Caco-2 (cell line): ENCODE measurements at regions of chr6 and their contacts with region 1.

Region 1: GRCh38 chr6:125314019-125314581 is 12.3 kb upstream of the HDDC2 start:
- DNase-seq: peak; percentile 50 to 59
- H3K4me3 ChIP-seq: no peak overlapping the region
- H3K4me3 Mint-ChIP-seq: no peak overlapping the region
- H3K27ac Mint-ChIP-seq: no peak overlapping the region
- H3K4me1 ChIP-seq: 0 out of 2 replicates have a peak, but pooled peaks cover 5% of the 10 kb centered on the region
- H3K4me1 Mint-ChIP-seq: no peaks in the 10 kb centered on the region
- H3K27me3 ChIP-seq: no peaks in the 10 kb centered on the region
- H3K27me3 Mint-ChIP-seq: peaks cover 3% of the 10 kb centered on the region
- CTCF ChIP-seq: peak; percentile 68 to 86

Region 2: DNA sequence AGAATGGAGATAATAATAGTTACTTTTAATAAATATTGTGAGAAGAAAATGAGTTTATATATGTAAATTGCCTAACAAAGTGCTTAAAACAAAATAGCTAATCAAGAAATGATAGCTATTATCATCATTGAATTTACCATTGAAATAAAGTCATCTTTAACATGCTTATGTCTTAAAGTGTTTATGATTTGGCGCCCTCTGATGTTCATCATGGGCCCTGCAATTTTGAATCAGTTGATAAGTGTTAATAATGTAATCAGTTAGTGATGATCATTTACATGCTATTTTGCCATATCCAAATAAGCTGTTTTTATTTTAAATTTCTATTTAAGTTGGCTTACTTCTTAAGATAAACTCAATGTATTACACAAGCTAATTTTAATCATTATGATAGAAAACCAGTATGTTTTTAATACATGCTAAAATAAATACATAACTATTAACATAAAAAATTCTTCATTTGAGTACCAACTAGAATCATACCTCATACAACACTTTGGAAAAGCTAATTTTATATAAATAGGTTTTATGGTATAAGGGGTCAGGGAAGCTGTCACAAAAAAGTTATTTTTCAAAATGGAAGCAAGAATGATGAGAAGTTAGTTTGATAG is 199.7 kb before region 1 on chr6:
- CTCF ChIA-PET with region 1: no interaction called
- POLR2A ChIA-PET with region 1: no interaction called
- intact Hi-C with region 1: no loop called
- DNase-seq: peak in 1 of 2 experiments; percentile 30
- H3K4me3 ChIP-seq: no peak overlapping the region
- H3K4me3 Mint-ChIP-seq: no peak overlapping the region
- H3K27ac Mint-ChIP-seq: no peak overlapping the region
- H3K4me1 ChIP-seq: no peaks in the 10 kb centered on the region
- H3K4me1 Mint-ChIP-seq: no peaks in the 10 kb centered on the region
- H3K27me3 ChIP-seq: no peaks in the 10 kb centered on the region
- H3K27me3 Mint-ChIP-seq: peaks cover 5% of the 10 kb centered on the region
- CTCF ChIP-seq: peak; percentile 53 to 63

Region 3: GRCh38 chr6:125346201-125346925 is 32.3 kb after region 1 on chr6:
- CTCF ChIA-PET with region 1: no interaction called
- POLR2A ChIA-PET with region 1: interaction called, 3 read pairs
- intact Hi-C with region 1: loop called (anchors 1 kb)
- DNase-seq: no peak
- H3K4me3 ChIP-seq: no peak overlapping the region
- H3K4me3 Mint-ChIP-seq: no peak overlapping the region
- H3K27ac Mint-ChIP-seq: no peak overlapping the region
- H3K4me1 ChIP-seq: no peaks in the 10 kb centered on the region
- H3K4me1 Mint-ChIP-seq: no peaks in the 10 kb centered on the region
- H3K27me3 ChIP-seq: no peaks in the 10 kb centered on the region; the same call in none of the 2 replicates
- H3K27me3 Mint-ChIP-seq: no peaks in the 10 kb centered on the region
- CTCF ChIP-seq: no peak

Region 4: DNA sequence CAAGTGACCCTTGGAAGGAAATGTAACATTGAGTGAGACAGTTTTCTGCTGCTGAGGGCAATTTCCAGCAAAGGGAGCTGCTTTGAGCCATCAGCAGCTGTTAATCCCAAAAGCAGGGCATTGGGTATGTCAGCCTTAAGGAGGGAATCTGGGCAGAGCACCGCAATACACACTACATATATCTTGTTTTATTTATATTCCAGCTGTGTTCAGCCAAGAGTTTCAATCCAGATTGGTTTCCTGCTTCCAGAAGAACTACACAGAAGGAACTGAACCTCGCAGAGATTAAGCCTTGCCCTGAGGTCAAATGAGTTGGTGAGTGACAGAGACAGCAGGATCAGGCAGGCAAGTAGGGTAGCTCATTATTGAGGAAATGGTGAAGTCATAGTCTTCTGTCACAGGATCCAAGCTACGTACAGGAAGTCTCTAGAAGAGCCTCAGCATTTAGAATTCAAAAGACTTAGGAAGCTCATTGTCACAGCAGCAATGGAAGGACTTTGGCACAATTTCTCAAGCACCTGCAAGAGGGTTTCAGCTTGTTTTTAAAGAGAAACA is 325.4 kb after region 1 on chr6:
- CTCF ChIA-PET with region 1: no interaction called
- POLR2A ChIA-PET with region 1: no interaction called
- intact Hi-C with region 1: loop called (anchors 10 kb)
- DNase-seq: no peak
- H3K4me3 ChIP-seq: no peak overlapping the region
- H3K4me3 Mint-ChIP-seq: no peak overlapping the region
- H3K27ac Mint-ChIP-seq: no peak overlapping the region
- H3K4me1 ChIP-seq: no peaks in the 10 kb centered on the region
- H3K4me1 Mint-ChIP-seq: no peaks in the 10 kb centered on the region
- H3K27me3 ChIP-seq: no peaks in the 10 kb centered on the region; the same call in 1 of the 2 replicates
- H3K27me3 Mint-ChIP-seq: peaks cover 4% of the 10 kb centered on the region
- CTCF ChIP-seq: no peak

Region 5: DNA sequence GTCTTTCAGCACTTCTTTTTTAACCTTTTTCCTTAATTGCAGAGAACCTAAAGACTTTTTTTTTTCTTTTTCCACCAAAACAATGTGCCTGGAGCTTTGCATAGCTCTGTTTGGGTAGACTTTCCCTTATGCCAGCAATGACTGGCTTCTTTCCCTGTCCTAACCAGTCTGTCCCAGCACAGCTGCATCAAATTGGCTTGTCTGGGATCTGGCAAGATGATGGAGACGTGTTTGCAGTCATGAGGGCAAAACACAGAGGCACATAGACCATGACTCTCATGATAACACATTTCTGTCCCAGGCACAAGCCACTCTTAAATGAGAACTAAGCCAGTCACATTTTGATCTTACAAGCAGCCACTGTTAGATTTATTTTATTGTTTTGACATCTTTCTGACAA is 451.8 kb after region 1 on chr6:
- CTCF ChIA-PET with region 1: no interaction called
- POLR2A ChIA-PET with region 1: no interaction called
- intact Hi-C with region 1: loop called (anchors 1 kb)
- DNase-seq: no peak
- H3K4me3 ChIP-seq: no peak overlapping the region
- H3K4me3 Mint-ChIP-seq: no peak overlapping the region
- H3K27ac Mint-ChIP-seq: no peak overlapping the region
- H3K4me1 ChIP-seq: no peaks in the 10 kb centered on the region
- H3K4me1 Mint-ChIP-seq: no peaks in the 10 kb centered on the region
- H3K27me3 ChIP-seq: no peaks in the 10 kb centered on the region
- H3K27me3 Mint-ChIP-seq: peaks cover 3% of the 10 kb centered on the region
- CTCF ChIP-seq: no peak

Region 6: DNA sequence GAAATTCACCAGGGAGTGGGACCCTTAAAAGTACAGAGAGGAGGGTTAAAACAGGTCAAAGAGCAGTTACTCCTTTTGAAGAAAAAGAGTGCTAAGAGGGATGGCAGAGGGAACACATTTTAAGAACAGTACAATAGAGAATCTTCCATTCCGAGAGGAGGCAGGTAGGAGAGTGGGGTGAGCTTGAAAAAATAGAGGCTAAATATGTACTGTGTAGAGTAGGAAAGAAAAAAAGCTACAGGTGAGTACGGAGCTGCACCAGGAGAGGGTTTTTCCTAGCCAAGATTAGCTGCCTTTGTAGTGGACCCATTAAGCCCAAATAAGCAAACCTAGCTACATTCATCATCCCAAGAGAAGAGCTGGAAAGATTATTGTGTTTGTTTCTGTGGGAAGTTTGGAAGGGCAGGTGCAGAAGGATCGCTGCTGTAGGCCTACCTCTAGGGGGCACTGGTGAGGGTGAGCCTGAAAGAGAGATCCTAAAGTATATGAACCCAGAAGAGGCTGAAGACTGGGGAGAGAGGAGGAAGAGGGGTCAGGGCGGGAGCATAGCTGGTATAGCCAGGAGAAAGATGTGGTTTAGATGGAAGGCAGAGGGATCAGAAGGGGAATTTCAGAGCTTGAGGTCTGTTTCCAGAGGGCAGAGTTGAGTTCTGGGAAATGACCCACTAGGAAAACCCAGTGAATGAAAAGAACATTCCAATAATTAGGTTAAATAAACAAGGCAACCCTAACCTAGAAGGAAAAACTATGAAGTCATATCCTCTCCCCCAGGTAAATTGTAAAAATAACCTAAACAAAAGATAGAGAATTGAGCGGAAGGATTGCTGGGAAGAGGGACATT is 592.3 kb after region 1 on chr6:
- CTCF ChIA-PET with region 1: no interaction called
- POLR2A ChIA-PET with region 1: no interaction called
- intact Hi-C with region 1: loop called (anchors 5 kb)
- DNase-seq: peak; percentile 53 to 64
- H3K4me3 ChIP-seq: no peak overlapping the region
- H3K4me3 Mint-ChIP-seq: no peak overlapping the region
- H3K27ac Mint-ChIP-seq: peak overlapping the region; percentile 7
- H3K4me1 ChIP-seq: peaks cover 29% of the 10 kb centered on the region
- H3K4me1 Mint-ChIP-seq: peaks cover 51% of the 10 kb centered on the region
- H3K27me3 ChIP-seq: no peaks in the 10 kb centered on the region
- H3K27me3 Mint-ChIP-seq: no peaks in the 10 kb centered on the region
- CTCF ChIP-seq: peak; percentile 68 to 71

Region 7: DNA sequence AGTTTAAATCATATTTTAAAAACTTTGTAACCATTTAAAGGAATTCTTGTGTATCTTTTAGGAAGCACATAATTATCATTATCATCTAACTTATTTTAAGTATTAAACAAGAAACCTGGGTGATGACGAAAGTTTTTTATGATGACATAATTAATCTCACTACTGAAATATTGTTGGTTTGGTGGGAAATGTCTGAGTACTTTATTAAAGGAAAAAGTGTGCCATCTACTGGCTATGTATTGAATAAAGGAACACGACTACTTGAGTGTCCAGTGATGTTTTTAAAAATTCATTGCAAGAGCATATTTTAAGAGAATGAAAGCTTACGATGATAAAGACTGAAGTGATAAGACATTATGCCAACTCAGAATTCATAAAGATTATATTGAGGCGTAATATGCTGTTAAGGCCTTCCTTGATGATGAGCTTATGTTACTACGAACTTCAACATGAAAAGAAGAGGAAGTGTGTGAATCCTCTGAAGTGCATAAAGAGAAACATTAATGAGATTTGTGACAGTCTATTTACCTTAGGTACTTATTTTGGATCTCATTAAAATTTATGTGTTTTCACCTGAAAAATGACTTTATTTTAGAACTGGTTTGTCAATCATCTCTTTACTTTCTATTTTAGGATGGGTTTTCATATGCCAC is 660.2 kb after region 1 on chr6:
- CTCF ChIA-PET with region 1: no interaction called
- POLR2A ChIA-PET with region 1: no interaction called
- intact Hi-C with region 1: loop called (anchors 1 kb)
- DNase-seq: peak in 1 of 2 experiments; percentile 41
- H3K4me3 ChIP-seq: no peak overlapping the region
- H3K4me3 Mint-ChIP-seq: no peak overlapping the region
- H3K27ac Mint-ChIP-seq: no peak overlapping the region
- H3K4me1 ChIP-seq: no peaks in the 10 kb centered on the region
- H3K4me1 Mint-ChIP-seq: no peaks in the 10 kb centered on the region
- H3K27me3 ChIP-seq: no peaks in the 10 kb centered on the region
- H3K27me3 Mint-ChIP-seq: no peaks in the 10 kb centered on the region
- CTCF ChIP-seq: peak; percentile 41 to 44